Testis (tissue), 5 donors: ENCODE measurements at regions of chr1 and their contacts with region 1.

Region 1: GRCh38 chr1:172449585-172450534 is 6.0 kb upstream of the PIGC start:
- DNase-seq: peak; percentile 71
- H3K4me3 ChIP-seq: no peak overlapping the region
- H3K27ac ChIP-seq: no peak overlapping the region
- H3K4me1 ChIP-seq: peaks cover 12% of the 10 kb centered on the region
- H3K27me3 ChIP-seq: no peaks in the 10 kb centered on the region
- CTCF ChIP-seq: peak; percentile 90 to 96 (median 94)
- POLR2A ChIP-seq: no peak

Region 2: GRCh38 chr1:172719694-172720138 is 269.9 kb after region 1 on chr1:
- intact Hi-C with region 1: loop called (anchors 5 kb)
- DNase-seq: no peak
- H3K4me3 ChIP-seq: no peak overlapping the region
- H3K27ac ChIP-seq: no peak overlapping the region
- H3K4me1 ChIP-seq: no peaks in the 10 kb centered on the region
- H3K27me3 ChIP-seq: no peaks in the 10 kb centered on the region
- CTCF ChIP-seq: peak; percentile 71 to 88 (median 73)
- POLR2A ChIP-seq: no peak

Region 3: DNA sequence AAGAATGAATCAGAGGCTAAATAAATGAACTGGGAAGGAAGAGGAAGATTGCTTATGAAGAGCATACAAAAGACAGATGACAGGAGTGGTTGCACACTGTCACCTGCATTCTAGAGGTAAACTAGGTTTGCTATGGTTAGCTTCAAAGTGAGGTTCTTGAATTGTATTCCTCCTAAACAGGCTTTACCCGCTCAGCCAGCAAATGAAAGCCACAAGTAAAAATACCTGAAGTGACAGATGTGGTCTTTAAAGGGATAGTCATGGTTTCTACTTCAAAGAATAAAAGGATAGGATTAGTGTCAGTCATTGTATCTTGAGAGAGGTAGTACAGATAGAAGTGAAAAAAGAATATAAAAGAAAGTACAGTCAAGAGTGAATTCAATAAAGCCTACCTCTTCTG is 994.9 kb after region 1 on chr1:
- intact Hi-C with region 1: no loop called
- DNase-seq: no peak
- H3K4me3 ChIP-seq: no peak overlapping the region
- H3K27ac ChIP-seq: no peak overlapping the region
- H3K4me1 ChIP-seq: peaks cover 2% of the 10 kb centered on the region
- H3K27me3 ChIP-seq: no peaks in the 10 kb centered on the region
- CTCF ChIP-seq: no peak
- POLR2A ChIP-seq: no peak